ENCODE measurements at regions of chr1 and their contacts with region 1.

Region 1: DNA sequence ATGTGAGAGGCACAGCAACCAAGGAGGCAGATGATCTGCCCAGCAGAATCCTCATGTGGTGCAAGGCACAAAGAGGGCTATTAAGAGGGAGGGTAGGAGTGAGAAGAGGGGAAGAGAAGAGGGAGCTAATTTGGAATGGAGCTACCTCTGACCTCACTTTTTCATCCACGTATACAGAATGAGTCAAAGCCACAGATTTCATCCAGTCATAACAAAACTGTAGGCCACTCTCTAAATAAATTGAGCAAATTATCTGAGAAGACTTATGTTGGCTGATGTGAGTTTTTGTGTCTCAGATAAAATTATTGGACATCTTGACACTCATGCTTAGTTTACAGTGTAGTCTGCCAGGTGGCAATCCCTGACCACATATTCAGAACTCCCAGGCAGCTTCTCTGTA is 325.6 kb downstream of the TTLL7 start:
- DNase-seq: no peak
- ATAC-seq: no peak

Region 2: GRCh38 chr1:83864991-83865390 is 191.7 kb after region 1 on chr1:
- intact Hi-C with region 1: no loop called
- DNase-seq: no peak
- ATAC-seq: no peak

Region 3: GRCh38 chr1:85344256-85344694 is 1671.0 kb after region 1 on chr1:
- intact Hi-C with region 1: loop called (anchors 5 kb)
- DNase-seq: no peak
- ATAC-seq: peak; percentile 74